Activated T-helper 1 cell treated with anti-CD3 and anti-CD28 coated beads, Interleukin-12 subunit alpha, Interleukin-12 subunit beta, Interleukin-2, Interleukin-4 antibody, amounts not matched to agents 30 ng/mL and 10 ng/mL and 1 ng/mL, durations not matched to agents 14 hours and 24 hours and 36 hours (primary cell): ENCODE measurements at regions of chr7 and their contacts with region 1.

Region 1: GRCh38 chr7:150448789-150449147 is 1.7 kb upstream of the GIMAP8 start:
- DNase-seq: peak; percentile 82
- H3K4me3 Mint-ChIP-seq: peak overlapping the region; percentile 97
- H3K27ac Mint-ChIP-seq: peak overlapping the region; percentile 95
- H3K4me1 Mint-ChIP-seq: peaks cover 66% of the 10 kb centered on the region
- H3K27me3 Mint-ChIP-seq: no peaks in the 10 kb centered on the region

Region 2: DNA sequence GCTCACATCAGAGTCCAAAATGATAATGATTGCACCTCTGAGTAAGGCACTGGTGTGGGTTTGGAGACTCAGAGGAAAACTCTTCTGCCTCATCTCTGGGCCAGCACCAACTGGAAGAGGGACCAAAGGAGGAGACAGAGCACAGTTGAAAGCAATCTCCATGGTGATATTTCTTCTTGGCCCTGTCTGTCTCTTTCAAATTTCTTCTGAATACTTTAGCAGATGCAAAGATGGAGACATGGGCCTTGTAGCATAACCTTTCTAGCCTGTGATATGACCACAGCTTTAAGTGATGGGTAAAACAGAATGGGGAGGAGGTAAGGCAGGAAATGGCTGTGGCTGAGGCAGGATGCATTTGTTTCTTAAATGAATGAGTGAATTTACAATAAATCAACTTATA is 53.8 kb after region 1 on chr7:
- intact Hi-C with region 1: loop called (anchors 2 kb)
- DNase-seq: no peak
- H3K4me3 Mint-ChIP-seq: peak overlapping the region; percentile 60
- H3K27ac Mint-ChIP-seq: peak overlapping the region; percentile 96
- H3K4me1 Mint-ChIP-seq: peaks cover 85% of the 10 kb centered on the region
- H3K27me3 Mint-ChIP-seq: no peaks in the 10 kb centered on the region

Region 3: DNA sequence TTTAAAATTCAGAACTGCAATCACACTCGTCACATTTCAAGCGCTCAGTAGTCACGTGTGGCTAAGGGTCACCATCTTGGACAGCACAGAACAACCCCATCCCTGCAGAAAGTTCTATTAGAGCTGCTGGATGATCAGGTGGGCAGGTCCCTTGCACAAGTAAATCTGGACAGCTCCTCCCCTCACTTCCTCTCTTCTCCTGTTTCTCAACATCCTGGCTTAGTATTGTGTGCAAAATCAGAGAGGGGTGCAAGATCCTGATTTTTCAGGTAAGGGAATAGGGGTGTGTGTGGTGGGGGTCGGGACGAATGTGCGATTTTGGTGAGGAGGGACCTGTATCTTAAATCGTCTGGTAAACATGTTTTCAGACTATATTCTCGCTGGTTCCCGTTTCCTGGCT is 118.4 kb after region 1 on chr7 and contains the start of gene GIMAP4:
- intact Hi-C with region 1: loop called (anchors 1 kb)
- DNase-seq: no peak
- H3K4me3 Mint-ChIP-seq: peak within 1 kb of the TSS; percentile 96
- H3K27ac Mint-ChIP-seq: peak within 1 kb of the TSS; percentile 99
- H3K4me1 Mint-ChIP-seq: peaks cover 93% of the 10 kb centered on the region
- H3K27me3 Mint-ChIP-seq: no peaks in the 10 kb centered on the region
- total RNA-seq, gene GIMAP4: 84.2 and 87.4 TPM in 2 replicates

Region 4: DNA sequence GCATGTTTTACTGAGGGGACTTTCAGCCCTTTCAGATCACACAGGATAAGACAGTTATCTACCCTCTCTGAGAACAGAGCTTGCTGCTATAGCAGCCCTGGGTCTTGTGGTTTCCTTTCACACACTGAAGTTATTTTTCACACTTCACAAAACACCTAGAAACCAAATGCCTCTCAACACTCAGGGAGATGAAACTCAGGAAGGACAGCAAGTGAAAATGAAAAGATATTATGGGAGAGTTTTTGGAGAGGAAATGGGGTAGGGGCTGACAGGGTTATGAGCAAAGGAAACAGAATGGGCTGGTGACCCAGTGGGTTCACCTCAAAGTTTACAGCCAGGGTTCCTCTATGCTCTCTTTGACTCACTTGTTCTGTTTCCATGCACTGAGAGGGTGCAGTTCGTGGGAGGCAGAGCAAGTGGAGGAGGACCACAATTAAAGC is 219.7 kb after region 1 on chr7:
- intact Hi-C with region 1: loop called (anchors 1 kb)
- DNase-seq: peak; percentile 74
- H3K4me3 Mint-ChIP-seq: peak overlapping the region; percentile 74
- H3K27ac Mint-ChIP-seq: peak overlapping the region; percentile 91
- H3K4me1 Mint-ChIP-seq: peaks cover 94% of the 10 kb centered on the region
- H3K27me3 Mint-ChIP-seq: no peaks in the 10 kb centered on the region

Region 5: DNA sequence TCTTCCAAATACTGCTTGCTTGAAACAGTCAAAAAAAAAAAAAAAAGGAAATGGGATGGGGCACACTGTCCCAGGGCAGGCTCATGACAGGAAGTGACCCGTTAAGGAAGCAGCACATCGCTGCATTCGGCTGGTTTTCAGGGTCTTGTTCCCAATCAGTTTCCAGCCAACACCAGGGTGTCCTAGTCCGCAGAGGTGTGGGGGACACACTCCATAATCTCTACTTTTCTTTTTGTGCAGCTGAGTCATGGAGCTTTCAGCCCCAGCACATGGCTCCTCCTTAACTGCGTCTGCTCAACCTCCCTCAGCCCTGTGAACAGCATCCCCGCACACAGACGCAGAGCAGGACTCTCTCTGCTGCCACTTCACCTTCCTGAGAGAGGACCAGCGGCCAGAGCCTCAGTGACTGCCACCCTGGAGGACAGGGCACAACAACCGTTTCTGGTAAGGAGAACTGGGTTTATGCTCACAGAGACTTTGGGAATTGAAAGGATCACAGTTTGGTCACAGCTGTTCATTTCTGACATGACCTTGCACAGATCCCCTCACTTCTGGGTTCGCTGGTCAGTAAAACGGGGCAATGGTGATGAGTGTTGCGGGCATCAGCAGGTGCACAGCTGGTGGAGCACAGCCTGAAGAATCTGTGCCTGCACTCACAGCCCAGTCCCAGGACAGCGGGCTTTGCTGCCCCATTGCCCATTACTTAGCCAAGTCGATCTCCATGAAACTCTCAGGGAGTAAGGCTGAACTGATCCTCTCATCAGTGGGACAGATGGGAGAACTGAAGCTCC is 288.7 kb after region 1 on chr7 and contains the start of gene GIMAP5:
- intact Hi-C with region 1: loop called (anchors 1 kb)
- DNase-seq: peak; percentile 51
- H3K4me3 Mint-ChIP-seq: peak within 1 kb of the TSS; percentile 97
- H3K27ac Mint-ChIP-seq: peak within 1 kb of the TSS; percentile 99
- H3K4me1 Mint-ChIP-seq: peaks cover 88% of the 10 kb centered on the region
- H3K27me3 Mint-ChIP-seq: no peaks in the 10 kb centered on the region
- total RNA-seq, gene GIMAP5: 53.8 and 59.7 TPM in 2 replicates